ENCODE measurements at regions of chr7 and their contacts with region 1.

Region 1: DNA sequence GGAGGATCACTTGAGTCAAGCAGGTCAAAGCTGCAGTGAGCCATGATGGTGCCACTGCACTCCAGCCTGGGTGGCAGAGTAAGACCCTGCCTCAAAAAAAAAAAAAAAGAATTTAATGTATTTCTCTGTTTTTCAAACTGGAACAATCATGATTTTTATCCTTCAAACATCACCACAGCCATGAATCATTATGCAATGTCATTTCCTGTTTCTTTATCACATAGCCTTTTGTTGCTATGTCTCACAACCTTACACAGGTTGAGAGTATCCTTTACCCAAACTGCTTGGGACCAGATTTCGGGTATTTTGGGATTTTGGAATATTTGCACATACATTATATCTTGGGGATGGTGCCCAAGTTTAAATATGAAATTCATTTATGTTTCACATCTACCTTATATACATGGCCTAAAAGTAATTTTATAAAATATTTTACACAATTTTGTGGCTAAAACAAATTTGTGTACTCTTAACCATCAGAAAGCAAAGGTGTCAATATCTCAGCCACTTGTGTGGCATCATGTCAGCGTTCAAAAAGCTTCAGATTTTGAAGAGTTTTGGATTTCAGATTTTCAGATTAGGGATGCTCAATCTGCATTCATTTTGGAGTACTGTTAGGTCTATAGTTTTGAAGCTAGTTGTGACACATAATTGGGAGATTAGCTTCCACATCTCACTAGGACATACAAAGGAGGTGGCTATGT is 8.2 kb downstream of the NT5C3A start:
- DNase-seq: no peak
- CTCF ChIP-seq: no peak

Region 2: DNA sequence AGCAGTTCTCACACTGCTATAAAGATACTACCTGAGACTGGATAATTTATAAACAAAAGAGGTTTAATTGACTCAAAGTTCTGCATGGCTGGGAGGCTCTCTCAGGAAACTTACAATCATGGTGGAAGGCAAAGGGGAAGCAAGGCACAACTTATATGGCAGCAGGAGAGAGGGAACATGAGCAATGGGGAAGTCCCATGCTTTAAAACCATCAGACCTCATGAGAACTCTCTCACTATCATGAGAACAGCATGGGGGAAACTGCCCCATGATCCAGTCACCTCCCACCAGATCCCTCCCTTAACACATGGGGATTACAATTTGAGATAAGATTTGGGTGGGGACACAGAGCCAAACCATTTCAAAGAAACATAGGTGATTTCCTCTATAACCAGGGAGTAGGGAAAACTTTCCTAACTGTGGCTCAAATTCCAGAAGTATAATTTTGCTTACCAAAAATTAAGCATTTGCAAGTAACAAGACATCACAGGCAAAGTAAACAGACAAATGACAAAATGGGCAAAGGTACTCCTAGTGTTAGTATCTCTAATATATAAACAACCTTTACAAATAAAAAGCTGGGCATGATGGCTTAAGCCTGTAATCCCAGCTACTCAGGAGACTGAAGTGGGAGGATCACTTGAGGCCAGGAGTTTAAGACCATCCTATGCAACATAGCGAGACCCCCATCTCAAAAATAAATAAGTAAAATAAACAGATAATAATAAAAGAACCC is 250.8 kb before region 1 on chr7:
- CTCF ChIA-PET with region 1: interaction called, 14 read pairs
- POLR2A ChIA-PET with region 1: no interaction called
- DNase-seq: no peak
- CTCF ChIP-seq: no peak

Region 3: DNA sequence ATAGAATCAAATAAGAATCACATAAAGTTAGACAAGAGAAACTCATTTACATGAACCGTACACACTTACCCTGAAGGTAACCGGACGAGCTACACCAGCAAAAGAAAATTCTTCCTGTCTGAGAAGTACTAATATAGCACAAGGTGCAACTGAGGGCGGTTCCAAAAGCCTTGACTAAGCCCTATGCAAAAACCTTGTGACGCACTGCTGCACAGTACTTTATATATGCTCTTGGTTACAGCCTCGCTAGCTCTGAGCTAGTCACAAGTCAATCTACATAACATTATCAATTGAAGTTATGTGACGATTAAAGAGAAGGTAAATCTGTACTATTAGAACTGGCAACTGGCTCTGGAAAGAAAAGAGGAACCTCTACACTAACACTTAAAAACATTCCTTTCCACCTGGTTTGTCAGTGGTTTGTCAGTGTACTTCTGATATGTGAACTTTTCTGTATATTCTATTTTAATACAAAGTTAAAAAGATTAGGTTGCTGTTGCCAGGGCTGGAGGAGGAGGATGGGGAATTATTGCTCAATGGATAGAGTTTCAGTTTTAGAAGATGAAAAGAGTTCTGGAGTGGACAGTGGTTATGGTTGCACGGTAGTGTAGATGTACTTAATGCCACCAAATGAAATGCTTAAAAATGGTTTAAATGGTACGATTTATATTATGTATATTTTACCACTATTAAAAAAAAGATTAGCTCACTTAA is 13.5 kb before region 1 on chr7:
- CTCF ChIA-PET with region 1: interaction called, 20 read pairs
- POLR2A ChIA-PET with region 1: interaction called, 5 read pairs
- DNase-seq: peak; percentile 69
- CTCF ChIP-seq: no peak